PC-3 (cell line): ENCODE measurements at regions of chr5 and their contacts with region 1.

Region 1: GRCh38 chr5:119527351-119527750 is 75.1 kb downstream of the HSD17B4 start:
- DNase-seq: peak; percentile 77
- ATAC-seq: peak; percentile 89
- H3K4me3 ChIP-seq: no peak overlapping the region; the same call in 1 of the 2 replicates
- H3K27ac ChIP-seq: peak overlapping the region; percentile 76
- H3K4me1 ChIP-seq: peaks cover 29% of the 10 kb centered on the region
- H3K27me3 ChIP-seq: no peaks in the 10 kb centered on the region
- CTCF ChIP-seq: no peak

Region 2: GRCh38 chr5:119435436-119436132 is 91.8 kb before region 1 on chr5:
- CTCF ChIA-PET with region 1: no interaction called
- POLR2A ChIA-PET with region 1: no interaction called
- intact Hi-C with region 1: no loop called
- DNase-seq: peak; percentile 65
- ATAC-seq: no peak
- H3K4me3 ChIP-seq: no peak overlapping the region
- H3K27ac ChIP-seq: no peak overlapping the region
- H3K4me1 ChIP-seq: no peaks in the 10 kb centered on the region
- H3K27me3 ChIP-seq: no peaks in the 10 kb centered on the region
- CTCF ChIP-seq: peak; percentile 71

Region 3: DNA sequence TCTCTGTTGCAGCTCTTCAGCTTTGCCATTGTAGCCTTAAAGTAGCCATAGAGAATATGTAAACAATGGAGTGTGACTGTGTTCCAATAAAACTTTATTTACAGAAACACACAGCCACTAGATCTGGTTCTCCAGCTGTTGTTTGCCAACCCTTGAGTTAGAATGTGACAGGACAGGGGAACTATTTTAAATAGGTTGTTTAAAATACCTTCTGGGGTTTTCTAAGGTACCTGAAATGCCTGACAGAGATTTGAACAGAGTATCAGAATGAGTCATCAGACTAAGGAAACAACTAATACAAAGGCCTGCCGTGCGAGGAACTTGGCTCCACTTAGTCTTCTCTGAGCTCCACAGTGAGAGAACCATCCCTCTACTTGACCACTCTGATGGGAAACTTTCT is 10.4 kb after region 1 on chr5:
- CTCF ChIA-PET with region 1: no interaction called
- POLR2A ChIA-PET with region 1: no interaction called
- intact Hi-C with region 1: loop called (anchors 1 kb)
- DNase-seq: peak; percentile 84
- ATAC-seq: peak; percentile 97
- H3K4me3 ChIP-seq: no peak overlapping the region
- H3K27ac ChIP-seq: peak overlapping the region; percentile 72
- H3K4me1 ChIP-seq: peaks cover 20% of the 10 kb centered on the region
- H3K27me3 ChIP-seq: no peaks in the 10 kb centered on the region
- CTCF ChIP-seq: no peak

Region 4: GRCh38 chr5:119743927-119744326 is 216.6 kb after region 1 on chr5:
- CTCF ChIA-PET with region 1: no interaction called
- POLR2A ChIA-PET with region 1: no interaction called
- intact Hi-C with region 1: loop called (anchors 5 kb)
- DNase-seq: peak; percentile 65
- ATAC-seq: peak; percentile 62
- H3K4me3 ChIP-seq: no peak overlapping the region
- H3K27ac ChIP-seq: no peak overlapping the region
- H3K4me1 ChIP-seq: peaks cover 3% of the 10 kb centered on the region; the same call in 1 of the 2 replicates
- H3K27me3 ChIP-seq: no peaks in the 10 kb centered on the region
- CTCF ChIP-seq: peak; percentile 70